HepG2 (cell line): ENCODE measurements at regions of chr1 and their contacts with region 1.

Region 1: DNA sequence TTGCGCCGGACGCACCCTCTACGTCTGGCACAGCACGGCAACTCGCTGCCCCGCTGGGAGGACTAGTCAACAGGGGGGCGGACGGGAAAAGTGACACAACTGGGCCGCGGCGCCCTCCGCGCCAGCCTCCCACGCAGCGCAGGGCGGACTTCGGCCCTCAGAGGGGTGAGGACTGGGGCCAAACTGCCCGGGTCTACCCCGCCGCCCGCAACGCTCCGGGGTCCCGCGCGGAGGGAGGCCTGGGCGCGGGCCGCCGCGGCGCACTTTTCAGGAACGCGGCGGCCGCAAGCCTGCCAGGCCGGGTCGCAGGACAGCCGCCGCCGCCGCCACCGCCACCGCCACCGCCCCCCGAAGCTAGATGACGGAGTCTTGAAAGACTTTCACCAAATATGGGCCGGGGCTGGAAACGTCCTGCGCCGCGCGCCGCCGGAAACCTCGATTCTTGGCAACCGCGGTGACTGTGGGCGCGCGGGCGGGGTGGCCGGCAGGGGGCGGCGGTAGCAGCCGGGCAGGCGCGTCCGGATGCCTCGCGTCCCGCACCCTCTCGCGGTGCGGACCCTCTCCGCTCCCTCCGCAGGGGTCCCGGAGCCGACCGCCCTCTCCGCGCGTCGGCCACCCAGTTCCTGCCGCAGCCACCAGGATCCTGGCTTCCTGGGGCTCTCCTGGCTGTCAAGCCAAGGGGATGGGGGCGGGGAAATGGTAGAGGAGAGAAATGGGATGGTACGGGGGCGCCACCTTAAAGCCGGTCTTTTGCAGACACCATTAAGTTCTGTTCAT is 3.7 kb upstream of the CCN1 start:
- DNase-seq: peak; percentile 37
- ATAC-seq: peak; percentile 66
- H3K4me3 ChIP-seq: peak overlapping the region; percentile 63 to 90 (median 78)
- H3K27ac ChIP-seq: no peak overlapping the region
- H3K4me1 ChIP-seq: peaks cover 55% of the 10 kb centered on the region
- H3K27me3 ChIP-seq: peaks cover 0 to 25% of the 10 kb centered on the region in 2 experiments; a peak in 4 of 5 replicates
- CTCF ChIP-seq: peak; percentile 69
- EP300 ChIP-seq: no peak
- POLR2A ChIP-seq: 0 out of 4 replicates have a peak, but pooled peaks of 1 of the 2 experiments have one; percentile 15
- RAD21 ChIP-seq: peak; percentile 68

Region 2: GRCh38 chr1:85307987-85308832 is 268.6 kb before region 1 on chr1:
- CTCF ChIA-PET with region 1: interaction called, 14 read pairs
- POLR2A ChIA-PET with region 1: no interaction called
- in situ Hi-C with region 1: no loop called
- intact Hi-C with region 1: loop called (anchors 1 kb)
- DNase-seq: peak; percentile 70
- ATAC-seq: peak; percentile 97
- H3K4me3 ChIP-seq: peak overlapping the region in 2 of 3 experiments; percentile 29; a peak in 2 of 6 replicates
- H3K27ac ChIP-seq: no peak overlapping the region
- H3K4me1 ChIP-seq: peaks cover 15% of the 10 kb centered on the region
- H3K27me3 ChIP-seq: 0 out of 5 replicates have a peak, but pooled peaks cover 0 to 4% of the 10 kb centered on the region in 2 experiments
- CTCF ChIP-seq: peak; percentile 98
- EP300 ChIP-seq: no peak
- POLR2A ChIP-seq: no peak
- RAD21 ChIP-seq: peak; percentile 98

Region 3: DNA sequence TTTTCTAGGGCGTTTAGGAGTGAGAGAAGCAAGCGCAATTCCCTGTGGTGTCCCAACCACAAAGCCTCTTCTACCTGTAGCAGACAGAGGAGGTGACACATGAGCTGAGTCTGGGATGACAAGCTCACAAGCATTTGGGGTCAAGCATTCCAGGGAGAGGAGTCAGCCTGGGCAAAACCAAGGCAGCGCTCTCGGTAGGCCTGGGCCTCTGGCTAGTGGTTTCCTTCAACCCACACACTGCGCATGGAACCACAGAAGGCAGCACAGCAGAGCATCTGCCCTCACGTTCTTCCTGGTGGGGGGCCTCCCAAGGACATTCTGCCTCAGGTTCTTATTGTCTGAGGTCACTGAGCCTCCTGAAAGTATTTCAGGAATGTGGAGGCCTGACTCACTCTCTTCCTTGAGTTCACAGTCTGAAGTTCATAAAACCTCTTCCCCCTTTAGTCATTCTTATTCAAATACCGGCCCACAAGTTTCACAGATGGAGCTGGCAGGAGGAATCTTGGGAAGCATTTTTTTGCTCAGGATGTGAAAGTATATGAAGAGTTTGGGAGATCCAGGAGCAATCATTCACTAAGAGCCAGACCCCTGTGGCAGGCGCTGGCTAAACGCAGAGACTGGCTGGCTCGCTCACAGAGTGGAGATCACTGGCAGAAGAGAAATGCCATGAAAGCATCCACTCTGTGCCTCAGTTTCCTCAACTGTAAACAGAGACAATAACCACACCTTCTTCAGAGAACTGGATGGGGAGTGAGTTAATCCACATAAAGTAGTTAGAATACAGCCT is 30.5 kb after region 1 on chr1:
- CTCF ChIA-PET with region 1: interaction called, 3 read pairs
- POLR2A ChIA-PET with region 1: interaction called, 58 read pairs
- in situ Hi-C with region 1: no loop called
- intact Hi-C with region 1: loop called (anchors 2 kb)
- DNase-seq: peak; percentile 85
- ATAC-seq: peak; percentile 78
- H3K4me3 ChIP-seq: peak overlapping the region in 1 of 3 experiments; percentile 23; a peak in 2 of 6 replicates
- H3K27ac ChIP-seq: no peak overlapping the region
- H3K4me1 ChIP-seq: peaks cover 57% of the 10 kb centered on the region
- H3K27me3 ChIP-seq: no peaks in the 10 kb centered on the region
- CTCF ChIP-seq: no peak
- EP300 ChIP-seq: peak; percentile 18 to 73; a peak in 3 of 4 replicates
- POLR2A ChIP-seq: no peak
- RAD21 ChIP-seq: no peak

Region 4: GRCh38 chr1:85638412-85638811 is 61.6 kb after region 1 on chr1:
- CTCF ChIA-PET with region 1: no interaction called
- POLR2A ChIA-PET with region 1: interaction called, 13 read pairs
- in situ Hi-C with region 1: no loop called
- intact Hi-C with region 1: loop called (anchors 5 kb)
- DNase-seq: no peak
- ATAC-seq: no peak
- H3K4me3 ChIP-seq: no peak overlapping the region
- H3K27ac ChIP-seq: no peak overlapping the region
- H3K4me1 ChIP-seq: peaks cover 20% of the 10 kb centered on the region
- H3K27me3 ChIP-seq: no peaks in the 10 kb centered on the region
- CTCF ChIP-seq: no peak
- EP300 ChIP-seq: no peak
- POLR2A ChIP-seq: no peak
- RAD21 ChIP-seq: no peak

Region 5: GRCh38 chr1:85661767-85662166 is 84.9 kb after region 1 on chr1:
- CTCF ChIA-PET with region 1: no interaction called
- POLR2A ChIA-PET with region 1: no interaction called
- in situ Hi-C with region 1: no loop called
- intact Hi-C with region 1: no loop called
- DNase-seq: no peak
- ATAC-seq: peak; percentile 51; the same call in 1 of the 3 replicates
- H3K4me3 ChIP-seq: no peak overlapping the region
- H3K27ac ChIP-seq: no peak overlapping the region
- H3K4me1 ChIP-seq: peaks cover 13% of the 10 kb centered on the region; the same call in 1 of the 2 replicates
- H3K27me3 ChIP-seq: no peaks in the 10 kb centered on the region; a peak in 1 of 5 replicates
- CTCF ChIP-seq: no peak
- EP300 ChIP-seq: no peak
- POLR2A ChIP-seq: no peak
- RAD21 ChIP-seq: no peak

Region 6: DNA sequence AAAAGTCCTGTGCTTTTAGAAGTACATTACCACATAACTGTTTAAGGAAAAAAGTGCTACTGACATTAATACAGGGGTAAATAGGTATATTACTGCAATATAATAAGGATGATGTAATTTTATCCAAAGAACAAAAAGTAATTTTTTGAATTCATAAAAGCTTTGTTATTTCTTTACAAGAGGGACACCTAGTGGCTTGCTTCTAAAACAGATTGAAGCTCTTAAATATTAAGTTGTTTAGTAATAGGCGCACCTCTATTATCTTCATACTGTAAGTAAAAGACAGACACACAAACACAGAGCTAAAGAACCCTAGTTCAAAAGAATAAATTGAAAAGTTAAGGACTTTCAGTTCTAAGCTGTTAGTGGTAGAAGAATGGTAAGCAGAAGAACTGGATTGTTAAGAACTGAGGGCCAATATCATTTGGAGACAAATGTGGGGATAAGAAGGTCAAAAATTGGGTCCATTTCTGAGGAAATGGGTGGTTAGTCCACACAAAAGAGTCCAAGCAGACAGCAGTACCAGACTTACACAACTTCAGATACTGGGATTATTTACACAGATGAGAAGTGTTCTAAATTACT is 116.0 kb after region 1 on chr1:
- CTCF ChIA-PET with region 1: no interaction called
- POLR2A ChIA-PET with region 1: no interaction called
- in situ Hi-C with region 1: loop called (anchors 10 kb)
- intact Hi-C with region 1: loop called (anchors 1 kb)
- DNase-seq: peak; percentile 37
- ATAC-seq: no peak
- H3K4me3 ChIP-seq: no peak overlapping the region
- H3K27ac ChIP-seq: peak overlapping the region; percentile 5
- H3K4me1 ChIP-seq: no peaks in the 10 kb centered on the region
- H3K27me3 ChIP-seq: no peaks in the 10 kb centered on the region
- CTCF ChIP-seq: peak; percentile 33; the same call in 1 of the 2 replicates
- EP300 ChIP-seq: no peak
- POLR2A ChIP-seq: no peak
- RAD21 ChIP-seq: 0 out of 2 replicates have a peak, but pooled peaks have one; percentile 15

Region 7: GRCh38 chr1:86218859-86219258 is 642.0 kb after region 1 on chr1:
- CTCF ChIA-PET with region 1: no interaction called
- POLR2A ChIA-PET with region 1: no interaction called
- in situ Hi-C with region 1: no loop called
- intact Hi-C with region 1: no loop called
- DNase-seq: no peak
- ATAC-seq: no peak
- H3K4me3 ChIP-seq: no peak overlapping the region
- H3K27ac ChIP-seq: no peak overlapping the region
- H3K4me1 ChIP-seq: no peaks in the 10 kb centered on the region
- H3K27me3 ChIP-seq: no peaks in the 10 kb centered on the region
- CTCF ChIP-seq: no peak
- EP300 ChIP-seq: no peak
- POLR2A ChIP-seq: no peak
- RAD21 ChIP-seq: no peak

Region 8: GRCh38 chr1:87328272-87329050 is 1751.6 kb after region 1 on chr1 and contains the start of gene LMO4:
- CTCF ChIA-PET with region 1: no interaction called
- POLR2A ChIA-PET with region 1: no interaction called
- in situ Hi-C with region 1: no loop called
- intact Hi-C with region 1: loop called (anchors 5 kb)
- DNase-seq: peak; percentile 93
- ATAC-seq: peak; percentile 85
- H3K4me3 ChIP-seq: peak within 1 kb of the TSS; percentile 80 to 96 (median 87)
- H3K27ac ChIP-seq: peak within 1 kb of the TSS; percentile 87
- H3K4me1 ChIP-seq: peaks cover 28% of the 10 kb centered on the region
- H3K27me3 ChIP-seq: peaks cover 0 to 6% of the 10 kb centered on the region in 2 experiments; a peak in 2 of 5 replicates
- CTCF ChIP-seq: no peak
- EP300 ChIP-seq: no peak
- POLR2A ChIP-seq: peak; percentile 59 to 84
- RAD21 ChIP-seq: peak; percentile 23; the same call in 1 of the 2 replicates
- total RNA-seq, gene LMO4: 18.2 and 19.3 TPM in 2 replicates